Transverse colon (tissue), 4 donors: ENCODE measurements at regions of chr20 and their contacts with region 1.

Region 1: GRCh38 chr20:55264703-55265239 is 740.5 kb downstream of the CBLN4 start:
- DNase-seq: no peak
- H3K4me3 ChIP-seq: no peak overlapping the region
- H3K27ac ChIP-seq: no peak overlapping the region
- H3K4me1 ChIP-seq: no peaks in the 10 kb centered on the region
- H3K27me3 ChIP-seq: no peaks in the 10 kb centered on the region
- CTCF ChIP-seq: no peak
- EP300 ChIP-seq: no peak
- POLR2A ChIP-seq: no peak

Region 2: GRCh38 chr20:54809793-54810192 is 455.0 kb before region 1 on chr20:
- in situ Hi-C with region 1: no loop called
- intact Hi-C with region 1: loop called (anchors 5 kb)
- DNase-seq: no peak
- H3K4me3 ChIP-seq: no peak overlapping the region
- H3K27ac ChIP-seq: no peak overlapping the region
- H3K4me1 ChIP-seq: no peaks in the 10 kb centered on the region
- H3K27me3 ChIP-seq: no peaks in the 10 kb centered on the region
- CTCF ChIP-seq: no peak
- EP300 ChIP-seq: no peak
- POLR2A ChIP-seq: no peak

Region 3: DNA sequence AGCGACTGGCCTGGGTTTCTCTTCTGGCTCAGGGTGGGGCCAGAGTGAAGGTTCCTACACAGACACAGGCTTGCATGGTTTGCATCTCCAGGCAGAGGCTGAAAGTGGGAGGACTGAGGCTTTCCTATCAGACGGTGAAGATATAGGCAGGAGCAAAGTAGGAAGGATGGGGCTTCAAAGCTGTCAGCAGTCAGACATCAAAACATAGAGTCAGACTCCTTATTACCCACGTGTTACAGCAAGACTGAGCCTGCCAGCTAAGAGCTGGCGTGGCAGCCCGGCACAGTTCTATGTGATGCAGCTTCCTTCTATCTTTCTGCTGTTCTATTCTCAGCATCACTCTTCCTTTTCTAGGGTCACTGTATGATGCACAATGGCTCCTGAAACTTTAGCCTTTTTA is 344.3 kb before region 1 on chr20:
- in situ Hi-C with region 1: no loop called
- intact Hi-C with region 1: no loop called
- DNase-seq: no peak
- H3K4me3 ChIP-seq: no peak overlapping the region
- H3K27ac ChIP-seq: no peak overlapping the region
- H3K4me1 ChIP-seq: no peaks in the 10 kb centered on the region
- H3K27me3 ChIP-seq: no peaks in the 10 kb centered on the region
- CTCF ChIP-seq: no peak
- EP300 ChIP-seq: no peak
- POLR2A ChIP-seq: no peak